ENCODE measurements at regions of chr6 and their contacts with region 1.

Region 1: GRCh38 chr6:30066577-30067459 is at the start of gene PPP1R11:
- DNase-seq: peak; percentile 99
- H3K4me3 Mint-ChIP-seq: peak within 1 kb of the TSS; percentile 97
- H3K27ac Mint-ChIP-seq: peak within 1 kb of the TSS; percentile 99
- H3K4me1 Mint-ChIP-seq: peaks cover 50% of the 10 kb centered on the region
- H3K27me3 Mint-ChIP-seq: peaks cover 11% of the 10 kb centered on the region
- total RNA-seq, gene PPP1R11: 69.8 and 71.0 TPM in 2 replicates

Region 2: GRCh38 chr6:29589423-29590048 is 477.3 kb before region 1 on chr6:
- intact Hi-C with region 1: no loop called
- DNase-seq: peak; percentile 40
- H3K4me3 Mint-ChIP-seq: no peak overlapping the region
- H3K27ac Mint-ChIP-seq: no peak overlapping the region
- H3K4me1 Mint-ChIP-seq: no peaks in the 10 kb centered on the region
- H3K27me3 Mint-ChIP-seq: peaks cover 11% of the 10 kb centered on the region

Region 3: GRCh38 chr6:29847871-29848630 is 218.8 kb before region 1 on chr6:
- intact Hi-C with region 1: loop called (anchors 1 kb)
- DNase-seq: peak; percentile 70
- H3K4me3 Mint-ChIP-seq: no peak overlapping the region
- H3K27ac Mint-ChIP-seq: peak overlapping the region; percentile 50
- H3K4me1 Mint-ChIP-seq: peaks cover 37% of the 10 kb centered on the region
- H3K27me3 Mint-ChIP-seq: peaks cover 34% of the 10 kb centered on the region

Region 4: GRCh38 chr6:29942275-29943052 is 124.4 kb before region 1 on chr6 and contains the start of gene HLA-A:
- intact Hi-C with region 1: loop called (anchors 2 kb)
- DNase-seq: peak; percentile 88
- H3K4me3 Mint-ChIP-seq: peak within 1 kb of the TSS; percentile 95
- H3K27ac Mint-ChIP-seq: peak within 1 kb of the TSS; percentile 98
- H3K4me1 Mint-ChIP-seq: peaks cover 57% of the 10 kb centered on the region
- H3K27me3 Mint-ChIP-seq: no peaks in the 10 kb centered on the region
- total RNA-seq, gene HLA-A: 1,482 and 1,503 TPM in 2 replicates

Region 5: DNA sequence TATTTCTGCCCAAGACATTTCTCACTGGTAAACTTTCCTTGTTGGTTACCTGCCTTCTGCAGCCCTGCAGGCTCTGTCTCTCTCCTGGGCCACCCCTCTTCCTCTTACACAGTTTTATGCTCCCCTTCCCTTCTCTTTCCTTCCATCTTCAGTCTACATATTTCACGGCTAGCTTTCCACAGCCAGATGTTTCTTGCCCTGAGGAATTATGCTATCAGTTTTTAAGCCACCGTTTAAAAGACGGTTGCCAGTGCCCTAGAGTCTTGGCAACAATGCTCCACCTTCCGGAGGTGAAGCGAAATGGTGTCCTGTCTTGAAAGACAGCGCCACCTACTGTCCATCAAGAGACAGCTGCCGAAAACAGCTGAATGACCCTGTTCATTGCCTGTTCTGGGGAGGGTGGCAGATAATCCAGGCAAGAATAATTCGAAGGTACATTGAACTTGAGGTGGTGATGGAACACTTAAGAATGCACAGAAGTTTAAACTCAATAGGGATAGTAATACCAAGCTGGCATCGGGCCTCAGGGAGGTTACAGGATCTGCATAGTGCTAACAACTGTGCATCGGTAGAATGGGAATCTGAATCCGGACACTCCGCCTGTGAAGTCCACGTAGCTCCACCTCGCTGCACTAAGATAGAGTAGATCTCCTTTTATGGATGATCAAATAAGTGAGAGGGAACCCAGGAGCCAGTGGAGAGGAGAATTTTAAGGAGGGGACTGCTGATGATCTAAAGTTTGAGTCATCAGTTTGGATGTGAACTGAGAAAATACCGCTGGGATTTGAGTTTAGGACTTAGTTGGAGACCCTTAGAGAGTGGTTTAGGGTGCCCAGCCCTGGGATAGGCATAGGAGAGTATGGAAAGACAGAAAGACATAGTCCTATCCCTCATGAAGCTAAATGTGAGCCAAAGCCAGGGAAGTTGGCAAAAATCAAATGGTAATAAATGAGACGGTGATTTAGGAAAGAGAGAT is 64.4 kb after region 1 on chr6:
- intact Hi-C with region 1: loop called (anchors 2 kb)
- DNase-seq: peak; percentile 57
- H3K4me3 Mint-ChIP-seq: no peak overlapping the region
- H3K27ac Mint-ChIP-seq: no peak overlapping the region
- H3K4me1 Mint-ChIP-seq: peaks cover 30% of the 10 kb centered on the region
- H3K27me3 Mint-ChIP-seq: peaks cover 65% of the 10 kb centered on the region

Region 6: GRCh38 chr6:30344868-30345671 is 278.3 kb after region 1 on chr6 and contains the start of gene RPP21:
- intact Hi-C with region 1: loop called (anchors 5 kb)
- DNase-seq: peak; percentile 84
- H3K4me3 Mint-ChIP-seq: peak within 1 kb of the TSS; percentile 91
- H3K27ac Mint-ChIP-seq: peak within 1 kb of the TSS; percentile 80
- H3K4me1 Mint-ChIP-seq: peaks cover 39% of the 10 kb centered on the region
- H3K27me3 Mint-ChIP-seq: peaks cover 5% of the 10 kb centered on the region
- total RNA-seq, gene RPP21: 54.2 and 62.8 TPM in 2 replicates

Region 7: GRCh38 chr6:31203345-31203979 is 1136.6 kb after region 1 on chr6:
- intact Hi-C with region 1: loop called (anchors 5 kb)
- DNase-seq: peak; percentile 54
- H3K4me3 Mint-ChIP-seq: peak overlapping the region; percentile 90
- H3K27ac Mint-ChIP-seq: peak overlapping the region; percentile 95
- H3K4me1 Mint-ChIP-seq: peaks cover 54% of the 10 kb centered on the region
- H3K27me3 Mint-ChIP-seq: no peaks in the 10 kb centered on the region

Measured in activated T-helper 1 cell treated with anti-CD3 and anti-CD28 coated beads, Interleukin-12 subunit alpha, Interleukin-12 subunit beta, Interleukin-2, Interleukin-4 antibody, amounts not matched to agents 30 ng/mL and 10 ng/mL and 1 ng/mL, durations not matched to agents 14 hours and 24 hours and 36 hours (primary cell).